ENCODE measurements at regions of chr3 and their contacts with region 1.

Region 1: DNA sequence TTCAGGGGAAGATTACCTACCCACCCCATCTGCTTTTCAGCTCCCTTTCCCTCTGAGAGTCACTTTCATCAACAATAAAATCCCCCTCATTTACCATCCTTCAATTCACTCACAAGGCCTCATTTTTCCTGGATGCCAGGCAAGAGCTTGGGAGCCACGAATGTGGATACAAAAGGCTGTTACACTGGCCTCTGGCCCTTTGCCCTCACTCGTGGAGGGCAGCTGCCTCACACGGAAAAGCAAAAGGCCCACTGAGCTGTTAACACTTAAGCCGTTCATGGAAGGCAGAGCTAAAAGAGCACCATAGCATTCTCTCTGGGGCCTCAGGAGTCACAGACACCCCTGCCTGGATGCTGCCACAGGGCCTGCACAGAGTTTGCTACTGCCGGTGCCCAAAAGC is 102.4 kb upstream of the TUSC7 start:
- DNase-seq: no peak

Region 2: DNA sequence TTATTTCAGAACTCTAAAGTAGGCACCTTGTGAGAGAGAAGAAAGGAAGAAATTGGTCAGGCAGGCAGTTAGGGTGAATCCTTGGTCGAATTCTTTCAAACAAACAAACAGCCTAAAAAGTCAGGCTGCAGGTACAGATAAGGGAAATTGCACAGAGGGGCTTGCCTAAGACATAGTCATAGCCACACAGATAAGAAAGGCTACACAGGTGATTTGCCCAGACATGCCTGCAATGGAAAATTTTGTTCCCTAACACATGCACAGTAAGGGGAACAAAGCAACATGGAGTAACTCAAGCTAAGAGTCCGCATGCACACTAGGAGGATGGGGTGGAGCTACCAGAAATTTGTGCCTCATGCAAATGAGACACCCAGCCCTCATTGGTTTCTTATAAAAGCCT is 10.9 kb after region 1 on chr3:
- intact Hi-C with region 1: loop called in 1 of 2 experiments (anchors 2 kb)
- DNase-seq: no peak

Measured in posterior vena cava (tissue), 2 donors.